Activated CD8-positive, alpha-beta memory T cell treated with anti-CD3 and anti-CD28 coated beads, Interleukin-2, amount 10 ng/mL, durations not matched to agents 7 days and 5 days (primary cell): ENCODE measurements at regions of chr7 and their contacts with region 1.

Region 1: DNA sequence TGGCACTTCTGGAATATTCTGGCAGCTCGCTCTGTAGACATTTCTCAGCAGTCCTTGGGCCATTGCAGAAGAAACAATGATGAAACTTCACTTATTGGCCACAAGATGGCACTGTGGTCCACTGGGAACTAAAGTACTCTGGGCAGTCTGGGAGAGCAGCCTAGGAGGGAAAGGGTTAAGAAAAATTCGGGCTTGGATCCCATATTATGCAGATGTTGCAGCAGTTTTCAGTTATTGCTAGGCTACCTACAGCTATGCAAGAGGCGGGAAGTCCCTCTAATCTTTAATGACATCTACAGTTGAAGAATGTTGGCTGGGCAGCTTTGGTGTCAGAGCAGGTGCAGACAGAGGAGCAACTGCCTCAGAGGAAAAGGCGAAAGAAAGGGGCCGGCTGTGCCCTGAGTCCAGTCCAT is 201.7 kb upstream of the PRSS58 start:
- DNase-seq: no peak
- ATAC-seq: peak; percentile 61
- H3K4me3 Mint-ChIP-seq: no peak overlapping the region
- H3K27ac Mint-ChIP-seq: no peak overlapping the region
- H3K4me1 Mint-ChIP-seq: peaks cover 44% of the 10 kb centered on the region
- H3K27me3 Mint-ChIP-seq: peaks cover 9% of the 10 kb centered on the region

Region 2: GRCh38 chr7:141053626-141054025 is 1405.9 kb before region 1 on chr7:
- CTCF ChIA-PET with region 1: no interaction called
- DNase-seq: peak; percentile 82
- ATAC-seq: peak; percentile 94
- H3K4me3 Mint-ChIP-seq: peak overlapping the region; percentile 14
- H3K27ac Mint-ChIP-seq: peak overlapping the region; percentile 83
- H3K4me1 Mint-ChIP-seq: peaks cover 24% of the 10 kb centered on the region
- H3K27me3 Mint-ChIP-seq: peaks cover 29% of the 10 kb centered on the region

Region 3: GRCh38 chr7:142434666-142435167 is 24.8 kb before region 1 on chr7:
- CTCF ChIA-PET with region 1: interaction called, 10 read pairs
- DNase-seq: no peak
- ATAC-seq: peak; percentile 55
- H3K4me3 Mint-ChIP-seq: peak overlapping the region; percentile 67
- H3K27ac Mint-ChIP-seq: peak overlapping the region; percentile 83
- H3K4me1 Mint-ChIP-seq: peaks cover 22% of the 10 kb centered on the region
- H3K27me3 Mint-ChIP-seq: peaks cover 4% of the 10 kb centered on the region

Region 4: GRCh38 chr7:142471820-142472219 is 12.3 kb after region 1 on chr7:
- CTCF ChIA-PET with region 1: interaction called, 84 read pairs
- DNase-seq: no peak
- ATAC-seq: no peak
- H3K4me3 Mint-ChIP-seq: no peak overlapping the region
- H3K27ac Mint-ChIP-seq: no peak overlapping the region
- H3K4me1 Mint-ChIP-seq: peaks cover 13% of the 10 kb centered on the region
- H3K27me3 Mint-ChIP-seq: no peaks in the 10 kb centered on the region

Region 5: GRCh38 chr7:142485617-142486226 is 26.2 kb after region 1 on chr7:
- CTCF ChIA-PET with region 1: interaction called, 40 read pairs
- DNase-seq: peak; percentile 55
- ATAC-seq: peak; percentile 44
- H3K4me3 Mint-ChIP-seq: no peak overlapping the region
- H3K27ac Mint-ChIP-seq: no peak overlapping the region
- H3K4me1 Mint-ChIP-seq: peaks cover 17% of the 10 kb centered on the region
- H3K27me3 Mint-ChIP-seq: no peaks in the 10 kb centered on the region